Ovary (tissue), 10 donors: ENCODE measurements at regions of chr14 and their contacts with region 1.

Region 1: GRCh38 chr14:99604283-99604765 is 317 bp upstream of the CCDC85C start:
- DNase-seq: peak; percentile 95 to 98 (median 96)
- H3K4me3 ChIP-seq: peak overlapping the region; percentile 80
- H3K27ac ChIP-seq: peak overlapping the region; percentile 67 to 77
- H3K4me1 ChIP-seq: peaks cover 26% of the 10 kb centered on the region
- H3K27me3 ChIP-seq: no peaks in the 10 kb centered on the region
- CTCF ChIP-seq: no peak
- EP300 ChIP-seq: no peak
- POLR2A ChIP-seq: no peak

Region 2: GRCh38 chr14:99524804-99525698 is 79.3 kb before region 1 on chr14:
- intact Hi-C with region 1: loop called in 1 of 4 experiments (anchors 5 kb)
- DNase-seq: peak in 1 of 5 donors; percentile 35
- H3K4me3 ChIP-seq: no peak overlapping the region
- H3K27ac ChIP-seq: no peak overlapping the region
- H3K4me1 ChIP-seq: peaks cover 18% of the 10 kb centered on the region
- H3K27me3 ChIP-seq: no peaks in the 10 kb centered on the region
- CTCF ChIP-seq: no peak
- EP300 ChIP-seq: no peak
- POLR2A ChIP-seq: no peak

Region 3: DNA sequence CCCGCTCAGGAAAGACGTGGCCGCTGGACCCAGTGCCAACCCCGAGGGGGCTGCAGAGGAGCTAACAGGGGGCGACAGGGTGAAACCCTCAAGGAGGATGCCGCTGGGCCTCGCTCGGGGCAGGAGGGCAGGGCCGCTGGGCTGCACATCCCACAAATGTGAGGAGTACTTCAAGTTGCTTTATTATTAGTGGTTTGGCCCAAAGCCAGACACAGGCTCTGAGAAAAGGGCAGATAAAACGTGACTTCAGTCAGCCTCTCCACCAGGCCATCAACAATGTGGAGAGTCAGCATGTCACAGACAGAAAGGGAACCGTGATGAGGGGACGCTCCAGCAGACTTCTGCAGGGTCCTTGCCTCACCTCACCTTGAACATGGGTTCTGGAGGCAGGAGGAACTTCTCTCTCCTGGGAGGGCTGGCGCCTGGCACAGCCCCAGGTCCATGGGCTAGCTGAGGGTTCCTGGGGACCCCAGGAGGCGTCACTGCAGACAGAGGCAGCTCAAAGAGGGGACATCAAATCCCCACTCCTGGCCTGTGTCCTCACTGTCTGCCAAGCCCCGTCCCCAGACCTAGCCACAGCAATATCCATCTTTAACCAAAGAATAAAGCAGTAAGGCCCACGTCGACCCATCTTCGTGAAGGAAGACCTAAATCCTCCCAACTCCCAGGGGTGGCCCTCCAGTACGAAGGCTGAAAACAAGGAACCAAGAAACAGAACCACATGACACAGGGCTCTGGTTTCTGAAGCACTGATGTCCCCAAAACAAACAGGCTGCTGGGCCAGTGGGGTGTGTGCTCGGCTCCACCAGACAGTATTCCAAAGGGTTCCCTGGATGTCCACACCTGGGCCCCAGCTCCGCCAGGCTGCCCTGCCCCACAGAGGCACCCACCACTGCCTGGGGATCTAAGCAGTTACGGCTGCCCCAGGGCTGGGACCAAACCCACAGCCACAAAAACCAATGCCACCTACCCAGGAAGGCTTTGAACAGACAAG is 35.5 kb before region 1 on chr14:
- intact Hi-C with region 1: loop called in 1 of 4 experiments (anchors 5 kb)
- DNase-seq: peak in 4 of 5 donors; percentile 49 to 62 (median 58)
- H3K4me3 ChIP-seq: no peak overlapping the region
- H3K27ac ChIP-seq: peak overlapping the region in 1 of 2 donors; percentile 12
- H3K4me1 ChIP-seq: peaks cover 19% of the 10 kb centered on the region
- H3K27me3 ChIP-seq: no peaks in the 10 kb centered on the region
- CTCF ChIP-seq: no peak
- EP300 ChIP-seq: no peak
- POLR2A ChIP-seq: no peak

Region 4: DNA sequence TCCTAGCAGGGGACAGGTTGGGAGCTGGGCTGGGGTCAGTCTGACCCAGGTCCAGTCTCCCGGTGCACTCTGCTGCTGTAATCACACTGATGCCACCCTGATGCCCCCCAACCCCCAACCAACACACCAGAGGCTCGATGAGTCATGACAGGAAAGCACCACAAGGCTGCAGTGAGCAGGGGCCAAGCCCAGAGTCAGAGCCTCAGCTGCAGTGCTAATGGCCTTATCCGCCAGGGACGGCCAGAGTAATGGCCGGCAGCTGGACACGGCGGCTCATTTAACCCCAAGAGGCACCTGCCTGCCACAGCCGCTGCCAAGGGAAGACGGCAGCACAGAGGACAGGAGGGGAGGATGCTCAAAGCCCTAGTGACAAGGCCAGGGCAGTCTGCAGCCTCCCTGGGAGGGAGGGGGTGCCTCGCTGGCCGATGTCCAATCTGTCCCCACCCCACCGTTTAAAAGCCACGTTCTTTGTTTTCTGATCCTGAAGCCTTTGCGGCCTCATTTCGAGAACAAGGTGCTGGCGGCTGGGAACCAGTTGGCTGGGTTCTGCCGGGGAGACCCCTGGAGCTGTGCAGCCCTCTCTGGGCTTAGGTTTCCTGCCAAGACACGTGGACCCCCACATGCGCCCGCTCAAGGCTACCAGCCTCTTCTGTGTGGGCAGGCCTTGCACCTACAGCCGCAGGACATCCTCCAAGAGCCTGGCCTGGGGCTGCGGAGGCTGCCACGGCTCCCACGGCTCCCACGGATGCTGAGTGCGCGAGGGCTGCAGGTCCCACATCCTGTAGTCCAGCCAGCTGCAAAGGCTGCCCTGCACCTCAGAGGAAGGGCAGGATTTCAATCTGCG is 13.4 kb before region 1 on chr14:
- intact Hi-C with region 1: no loop called
- DNase-seq: no peak
- H3K4me3 ChIP-seq: no peak overlapping the region
- H3K27ac ChIP-seq: no peak overlapping the region
- H3K4me1 ChIP-seq: peaks cover 16% of the 10 kb centered on the region
- H3K27me3 ChIP-seq: no peaks in the 10 kb centered on the region
- CTCF ChIP-seq: no peak
- EP300 ChIP-seq: no peak
- POLR2A ChIP-seq: no peak